PC-9 (cell line): ENCODE measurements at regions of chr2 and their contacts with region 1.

Region 1: GRCh38 chr2:223993621-223994232 is 36.5 kb downstream of the MRPL44 start:
- DNase-seq: peak; percentile 55 to 70
- H3K4me3 ChIP-seq: no peak overlapping the region
- H3K27ac ChIP-seq: no peak overlapping the region
- H3K4me1 ChIP-seq: no peaks in the 10 kb centered on the region
- H3K27me3 ChIP-seq: no peaks in the 10 kb centered on the region
- CTCF ChIP-seq: peak; percentile 98

Region 2: GRCh38 chr2:223315813-223316212 is 677.9 kb before region 1 on chr2:
- CTCF ChIA-PET with region 1: interaction called, 15 read pairs
- POLR2A ChIA-PET with region 1: no interaction called
- intact Hi-C with region 1: no loop called
- DNase-seq: no peak
- H3K4me3 ChIP-seq: no peak overlapping the region
- H3K27ac ChIP-seq: no peak overlapping the region
- H3K4me1 ChIP-seq: no peaks in the 10 kb centered on the region
- H3K27me3 ChIP-seq: no peaks in the 10 kb centered on the region
- CTCF ChIP-seq: no peak

Region 3: GRCh38 chr2:223957092-223957851 is 36.5 kb before region 1 on chr2 and contains the start of gene MRPL44:
- CTCF ChIA-PET with region 1: no interaction called
- POLR2A ChIA-PET with region 1: no interaction called
- intact Hi-C with region 1: no loop called
- DNase-seq: peak; percentile 92 to 100
- H3K4me3 ChIP-seq: peak within 1 kb of the TSS; percentile 81
- H3K27ac ChIP-seq: peak within 1 kb of the TSS; percentile 73
- H3K4me1 ChIP-seq: peaks cover 37% of the 10 kb centered on the region
- H3K27me3 ChIP-seq: no peaks in the 10 kb centered on the region
- CTCF ChIP-seq: 0 out of 2 replicates have a peak, but pooled peaks have one; percentile 7
- total RNA-seq, gene MRPL44: 66.4 and 76.6 TPM in 2 replicates

Region 4: GRCh38 chr2:224145751-224146355 is 152.1 kb after region 1 on chr2:
- CTCF ChIA-PET with region 1: interaction called, 4 read pairs
- POLR2A ChIA-PET with region 1: interaction called, 3 read pairs
- intact Hi-C with region 1: loop called (anchors 5 kb)
- DNase-seq: peak; percentile 36 to 51
- H3K4me3 ChIP-seq: no peak overlapping the region
- H3K27ac ChIP-seq: 0 out of 2 replicates have a peak overlapping the region, but pooled peaks have one; percentile 5
- H3K4me1 ChIP-seq: peaks cover 72% of the 10 kb centered on the region
- H3K27me3 ChIP-seq: no peaks in the 10 kb centered on the region
- CTCF ChIP-seq: no peak

Region 5: GRCh38 chr2:224195925-224196571 is 202.3 kb after region 1 on chr2:
- CTCF ChIA-PET with region 1: no interaction called
- POLR2A ChIA-PET with region 1: no interaction called
- intact Hi-C with region 1: no loop called
- DNase-seq: no peak
- H3K4me3 ChIP-seq: no peak overlapping the region
- H3K27ac ChIP-seq: no peak overlapping the region
- H3K4me1 ChIP-seq: peaks cover 27% of the 10 kb centered on the region
- H3K27me3 ChIP-seq: no peaks in the 10 kb centered on the region
- CTCF ChIP-seq: no peak

Region 6: DNA sequence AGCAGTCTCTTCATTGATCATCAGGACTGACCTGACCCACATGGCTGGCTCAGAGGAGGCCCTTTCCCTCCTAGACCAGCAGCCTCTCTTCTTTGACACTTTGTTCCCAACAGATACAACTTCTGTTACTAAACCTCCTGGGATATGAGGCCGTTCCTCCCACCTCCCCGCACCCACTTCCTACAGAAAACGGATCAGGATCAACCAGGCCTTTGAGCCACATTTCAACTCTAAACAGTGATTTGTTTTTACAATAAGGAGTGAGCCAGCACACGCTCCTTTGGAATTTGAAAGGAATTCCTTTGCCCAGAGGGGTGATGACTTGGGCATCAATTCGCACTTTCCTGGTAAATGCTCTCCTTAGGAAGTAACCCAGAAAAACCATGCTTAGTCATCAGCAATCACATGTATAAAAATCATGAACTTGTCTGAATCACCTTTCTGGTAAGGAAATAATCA is 227.8 kb after region 1 on chr2:
- CTCF ChIA-PET with region 1: interaction called, 3 read pairs
- POLR2A ChIA-PET with region 1: interaction called, 13 read pairs
- intact Hi-C with region 1: no loop called
- DNase-seq: peak; percentile 76 to 99
- H3K4me3 ChIP-seq: no peak overlapping the region
- H3K27ac ChIP-seq: peak overlapping the region; percentile 91
- H3K4me1 ChIP-seq: peaks cover 39% of the 10 kb centered on the region
- H3K27me3 ChIP-seq: no peaks in the 10 kb centered on the region
- CTCF ChIP-seq: no peak

Region 7: DNA sequence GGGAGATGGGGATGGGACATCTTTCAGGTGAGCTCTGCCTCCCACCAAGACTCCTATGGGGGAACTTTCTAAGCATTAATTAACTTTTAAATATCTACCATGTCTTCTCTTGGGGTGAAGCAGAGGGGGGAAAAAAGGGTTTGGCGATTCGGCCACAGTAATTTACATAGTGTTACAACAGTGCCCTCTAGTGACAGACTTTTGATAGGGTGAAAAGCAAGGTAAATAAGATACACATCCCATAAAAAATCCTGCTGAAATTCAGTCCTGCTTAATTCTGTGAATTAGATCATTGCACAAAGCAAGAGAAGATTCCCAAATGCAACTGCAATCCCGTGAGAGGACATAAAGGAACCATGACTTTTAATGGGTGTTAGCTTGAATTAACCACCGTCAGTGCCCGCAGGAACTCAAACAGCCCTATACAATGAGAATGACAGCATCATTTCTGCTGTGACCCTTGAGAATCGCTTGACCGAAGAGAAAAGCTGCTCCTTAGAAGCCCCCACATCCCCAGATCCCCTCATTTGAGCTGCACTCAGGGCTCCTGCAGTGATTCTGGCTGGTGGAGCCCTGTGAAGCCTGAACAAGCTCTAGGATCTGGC is 375.4 kb after region 1 on chr2:
- CTCF ChIA-PET with region 1: interaction called, 3 read pairs
- POLR2A ChIA-PET with region 1: no interaction called
- intact Hi-C with region 1: loop called (anchors 5 kb)
- DNase-seq: peak; percentile 40 to 50
- H3K4me3 ChIP-seq: no peak overlapping the region
- H3K27ac ChIP-seq: no peak overlapping the region
- H3K4me1 ChIP-seq: no peaks in the 10 kb centered on the region
- H3K27me3 ChIP-seq: no peaks in the 10 kb centered on the region
- CTCF ChIP-seq: peak; percentile 97

Region 8: GRCh38 chr2:224650815-224651439 is 657.2 kb after region 1 on chr2:
- CTCF ChIA-PET with region 1: interaction called, 5 read pairs
- POLR2A ChIA-PET with region 1: no interaction called
- intact Hi-C with region 1: loop called (anchors 2 kb)
- DNase-seq: peak; percentile 43 to 75
- H3K4me3 ChIP-seq: no peak overlapping the region
- H3K27ac ChIP-seq: no peak overlapping the region
- H3K4me1 ChIP-seq: peaks cover 6% of the 10 kb centered on the region
- H3K27me3 ChIP-seq: no peaks in the 10 kb centered on the region
- CTCF ChIP-seq: peak; percentile 100

Region 9: GRCh38 chr2:224778474-224778877 is 784.7 kb after region 1 on chr2:
- CTCF ChIA-PET with region 1: interaction called, 3 read pairs
- POLR2A ChIA-PET with region 1: no interaction called
- intact Hi-C with region 1: loop called (anchors 2 kb)
- DNase-seq: peak; percentile 67 to 75
- H3K4me3 ChIP-seq: no peak overlapping the region
- H3K27ac ChIP-seq: no peak overlapping the region
- H3K4me1 ChIP-seq: peaks cover 2% of the 10 kb centered on the region
- H3K27me3 ChIP-seq: no peaks in the 10 kb centered on the region
- CTCF ChIP-seq: peak; percentile 99